Activated CD4-positive, alpha-beta T cell treated with anti-CD3 and anti-CD28 coated beads, Interleukin-2, amount 10 ng/mL, durations not matched to agents 24 days and 14 days (primary cell): ENCODE measurements at regions of chr17 and their contacts with region 1.

Region 1: DNA sequence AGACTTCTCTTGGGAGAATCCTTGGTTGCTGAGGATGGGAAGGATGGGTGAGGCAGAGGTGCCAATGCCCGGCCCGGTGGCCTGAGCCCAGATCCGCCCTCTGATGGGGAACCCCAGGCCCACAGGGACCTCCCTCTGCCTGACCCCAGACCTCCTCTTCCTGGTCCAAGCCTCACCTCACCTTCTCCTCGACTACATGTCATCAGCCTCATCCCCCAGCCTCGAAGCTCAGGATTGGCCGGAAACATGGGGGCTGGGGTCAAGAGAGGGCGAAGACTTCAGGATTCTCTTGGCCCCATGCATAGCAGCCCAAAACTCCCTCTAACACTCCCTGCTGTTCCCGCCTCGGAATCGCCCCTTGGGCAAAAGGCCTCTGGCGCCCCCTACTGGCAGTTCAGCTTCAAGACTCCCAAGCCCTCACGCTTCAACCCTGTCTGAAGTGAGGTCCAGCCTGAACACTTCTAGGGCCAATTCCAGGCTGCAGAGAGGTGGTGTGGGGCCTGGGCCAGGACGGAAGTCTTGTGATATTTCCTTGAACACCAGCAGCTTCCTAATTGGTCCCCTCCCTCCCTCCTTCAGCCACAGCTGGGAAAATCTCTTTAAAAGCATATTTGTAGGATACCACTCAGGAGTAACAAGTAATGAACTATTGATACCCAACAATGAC is 47.2 kb downstream of the ARHGAP27 start:
- DNase-seq: peak; percentile 97
- H3K4me3 Mint-ChIP-seq: no peak overlapping the region
- H3K27ac Mint-ChIP-seq: peak overlapping the region; percentile 74
- H3K4me1 Mint-ChIP-seq: peaks cover 24% of the 10 kb centered on the region
- H3K27me3 Mint-ChIP-seq: peaks cover 4% of the 10 kb centered on the region

Region 2: DNA sequence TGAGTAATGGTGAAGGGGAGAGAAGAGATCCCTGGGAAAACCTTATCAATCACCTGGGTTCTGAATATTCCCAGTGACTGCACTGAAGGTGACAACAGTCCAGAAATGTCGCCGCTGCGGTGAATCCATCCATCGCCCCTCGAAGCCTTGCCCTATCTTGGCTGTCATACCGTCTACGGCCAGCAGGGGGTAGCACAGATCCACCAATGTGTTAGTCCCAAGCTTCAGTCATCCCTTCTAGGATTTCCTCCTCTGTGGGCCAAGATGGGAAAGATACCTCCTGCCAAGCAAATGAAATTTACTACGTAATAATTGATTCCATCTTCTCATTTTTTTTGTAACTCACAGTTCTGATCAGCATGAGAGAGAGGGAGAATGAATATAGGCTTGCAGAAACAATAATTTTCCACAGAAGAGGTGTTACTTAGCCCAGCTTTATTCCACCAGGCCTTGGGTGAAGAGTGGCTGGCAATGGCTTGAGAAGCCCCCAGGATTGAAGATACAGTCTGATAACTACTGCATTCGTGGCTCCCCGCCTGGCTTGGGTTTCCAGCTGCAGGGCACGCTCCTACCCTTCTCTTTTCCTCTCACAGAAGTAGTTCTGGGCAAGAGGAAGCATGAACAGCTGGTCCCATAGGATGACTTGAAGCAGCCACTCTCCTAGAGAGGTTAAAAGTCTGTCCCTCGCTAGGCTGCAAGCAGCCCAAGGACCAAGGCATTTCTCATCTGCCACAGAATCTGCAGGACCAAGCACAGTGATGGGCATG is 166.4 kb before region 1 on chr17:
- intact Hi-C with region 1: loop called (anchors 1 kb)
- DNase-seq: peak; percentile 96
- H3K4me3 Mint-ChIP-seq: peak overlapping the region; percentile 84
- H3K27ac Mint-ChIP-seq: peak overlapping the region; percentile 76
- H3K4me1 Mint-ChIP-seq: peaks cover 38% of the 10 kb centered on the region
- H3K27me3 Mint-ChIP-seq: no peaks in the 10 kb centered on the region

Region 3: GRCh38 chr17:45277216-45277849 is 108.1 kb before region 1 on chr17:
- intact Hi-C with region 1: loop called (anchors 1 kb)
- DNase-seq: peak; percentile 96
- H3K4me3 Mint-ChIP-seq: no peak overlapping the region
- H3K27ac Mint-ChIP-seq: peak overlapping the region; percentile 70
- H3K4me1 Mint-ChIP-seq: peaks cover 14% of the 10 kb centered on the region
- H3K27me3 Mint-ChIP-seq: no peaks in the 10 kb centered on the region

Region 4: DNA sequence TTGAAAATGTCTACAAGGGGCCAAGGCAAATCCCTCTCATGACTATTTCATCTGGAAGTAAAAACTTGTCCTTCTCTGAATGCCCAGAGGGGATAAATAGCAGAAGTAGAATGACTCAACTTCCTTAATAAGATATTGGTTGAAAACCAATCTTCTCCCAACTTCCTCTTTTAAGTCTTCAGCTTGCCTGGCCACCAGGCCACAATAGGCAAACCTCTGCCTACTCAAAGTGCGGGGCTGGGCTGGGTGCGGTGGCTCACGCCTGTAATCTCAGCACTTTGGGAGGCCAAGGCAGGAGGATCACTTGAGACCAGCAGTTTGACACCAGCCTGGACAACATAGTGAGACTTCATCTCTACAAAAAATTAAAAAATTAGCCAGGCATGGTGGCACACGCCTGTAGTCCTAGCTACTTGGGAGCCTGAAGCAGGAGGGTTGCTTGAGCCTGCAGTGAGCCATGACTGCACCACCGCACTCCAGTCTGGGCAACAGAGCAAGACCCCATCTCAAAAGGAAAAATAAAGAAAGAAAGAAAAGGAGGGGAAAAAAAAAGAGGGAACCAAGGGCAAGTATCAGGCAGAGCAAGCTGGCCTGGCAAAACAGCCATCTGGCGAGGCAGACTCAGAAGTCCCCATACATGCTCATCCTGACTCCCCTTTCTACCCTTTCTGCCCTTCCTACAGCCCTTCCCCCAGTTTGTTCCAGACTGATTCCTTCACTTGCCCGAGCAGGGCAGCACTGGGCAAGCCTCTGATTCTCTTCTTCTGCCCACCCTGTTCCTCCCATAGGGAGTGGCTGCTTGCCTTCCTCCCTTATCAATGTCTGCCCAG is 89.2 kb before region 1 on chr17:
- intact Hi-C with region 1: loop called (anchors 5 kb)
- DNase-seq: no peak
- H3K4me3 Mint-ChIP-seq: peak overlapping the region; percentile 29
- H3K27ac Mint-ChIP-seq: peak overlapping the region; percentile 84
- H3K4me1 Mint-ChIP-seq: peaks cover 72% of the 10 kb centered on the region
- H3K27me3 Mint-ChIP-seq: no peaks in the 10 kb centered on the region

Region 5: DNA sequence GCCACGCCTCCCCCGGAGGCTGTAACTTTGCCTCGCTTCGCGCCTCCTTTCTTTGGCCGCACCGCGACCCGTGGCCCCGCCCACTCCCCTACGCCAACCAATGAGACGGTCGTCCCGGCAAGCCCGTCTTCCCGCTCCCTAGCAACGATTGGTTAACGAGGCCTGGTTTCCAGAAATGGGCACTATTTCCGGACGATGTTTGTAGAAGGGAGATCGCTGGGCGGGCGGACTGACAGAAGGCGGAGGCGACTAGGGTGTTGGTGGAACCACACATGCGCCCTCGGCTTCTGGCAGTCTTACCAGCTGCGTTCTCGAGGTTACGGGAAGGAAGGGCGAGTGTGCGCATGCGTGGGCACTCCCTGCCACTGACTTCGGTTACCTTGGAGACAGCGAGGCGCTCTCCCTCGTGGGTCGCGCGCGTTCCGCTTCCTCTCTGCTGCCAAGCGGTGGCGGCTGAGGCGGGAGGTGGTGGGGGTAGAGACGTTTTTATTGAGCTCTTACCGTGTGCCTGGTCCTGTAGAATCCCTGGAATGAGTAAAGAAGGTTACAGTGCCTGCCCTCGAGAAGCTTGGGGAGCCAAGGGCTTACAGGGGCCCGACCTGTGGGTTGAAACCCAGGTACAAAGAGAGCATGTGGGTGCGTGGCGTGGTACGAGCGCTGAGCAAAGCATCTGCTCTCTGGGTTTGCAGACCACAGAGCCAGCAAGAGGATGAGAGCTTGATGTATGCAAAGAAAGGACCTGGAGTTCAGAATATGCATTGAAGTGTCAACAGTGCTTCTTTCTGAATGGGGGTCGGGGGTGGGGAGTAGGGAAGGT is 68.1 kb before region 1 on chr17:
- intact Hi-C with region 1: loop called (anchors 1 kb)
- DNase-seq: peak; percentile 100
- H3K4me3 Mint-ChIP-seq: peak overlapping the region; percentile 90
- H3K27ac Mint-ChIP-seq: peak overlapping the region; percentile 96
- H3K4me1 Mint-ChIP-seq: peaks cover 67% of the 10 kb centered on the region
- H3K27me3 Mint-ChIP-seq: peaks cover 3% of the 10 kb centered on the region

Region 6: GRCh38 chr17:45332505-45332904 is 53.0 kb before region 1 on chr17:
- intact Hi-C with region 1: no loop called
- DNase-seq: no peak
- H3K4me3 Mint-ChIP-seq: no peak overlapping the region
- H3K27ac Mint-ChIP-seq: peak overlapping the region; percentile 67
- H3K4me1 Mint-ChIP-seq: peaks cover 24% of the 10 kb centered on the region
- H3K27me3 Mint-ChIP-seq: peaks cover 2% of the 10 kb centered on the region